HAP-1 (cell line): ENCODE measurements at regions of chr12 and their contacts with region 1.

Region 1: DNA sequence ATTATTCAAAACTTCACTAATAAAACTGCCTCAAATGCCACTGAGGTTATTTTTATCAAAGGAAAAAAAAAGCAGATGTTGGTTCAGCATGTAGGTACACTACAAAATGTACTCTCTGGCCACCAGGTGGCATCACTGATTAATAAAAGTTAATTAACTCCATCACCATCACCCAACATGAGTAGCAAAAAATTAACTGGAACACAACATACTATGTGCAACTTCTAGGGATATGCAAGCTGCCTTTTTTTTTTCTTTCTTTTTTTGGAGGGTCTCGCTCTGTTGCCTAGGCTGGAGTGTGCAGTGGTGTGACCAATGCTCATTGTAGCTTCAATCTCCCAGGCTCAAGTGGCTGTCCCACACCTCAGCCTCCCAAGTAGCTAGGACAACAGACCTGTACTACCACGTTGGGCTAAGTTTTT is 43.8 kb upstream of the NR2C1 start:
- DNase-seq: peak; percentile 75 to 82
- H3K4me3 ChIP-seq: no peak overlapping the region
- H3K4me1 ChIP-seq: peaks cover 2% of the 10 kb centered on the region; the same call in 1 of the 2 replicates
- H3K27me3 ChIP-seq: no peaks in the 10 kb centered on the region

Region 2: GRCh38 chr12:94980577-94980976 is 136.6 kb before region 1 on chr12:
- in situ Hi-C with region 1: no loop called
- DNase-seq: peak in 1 of 2 experiments; percentile 63
- H3K4me3 ChIP-seq: no peak overlapping the region
- H3K4me1 ChIP-seq: peaks cover 5% of the 10 kb centered on the region; the same call in 1 of the 2 replicates
- H3K27me3 ChIP-seq: no peaks in the 10 kb centered on the region

Region 3: DNA sequence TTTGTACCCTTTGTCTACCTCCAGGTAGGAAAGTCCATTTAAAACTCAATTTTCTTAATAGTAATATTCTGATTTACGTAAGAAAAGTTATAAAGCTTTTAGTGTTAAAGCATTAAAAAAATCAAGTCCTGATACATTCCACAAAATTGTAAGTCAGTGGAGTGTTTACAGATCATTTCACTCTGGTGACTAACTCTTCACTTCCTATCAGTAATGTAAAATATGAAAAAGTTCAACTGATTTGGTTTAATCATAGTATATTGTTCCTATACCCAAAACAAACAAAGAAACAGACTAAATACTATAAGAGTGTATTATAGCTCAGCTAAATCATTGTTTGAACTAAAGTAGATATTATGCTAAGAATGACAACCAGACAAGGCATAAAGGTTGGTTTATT is 186.3 kb after region 1 on chr12:
- in situ Hi-C with region 1: no loop called
- DNase-seq: no peak
- H3K4me3 ChIP-seq: no peak overlapping the region
- H3K4me1 ChIP-seq: no peaks in the 10 kb centered on the region
- H3K27me3 ChIP-seq: no peaks in the 10 kb centered on the region

Region 4: GRCh38 chr12:95532851-95533250 is 415.7 kb after region 1 on chr12:
- in situ Hi-C with region 1: loop called (anchors 5 kb)
- DNase-seq: no peak
- H3K4me3 ChIP-seq: no peak overlapping the region
- H3K4me1 ChIP-seq: peaks cover under 1% of the 10 kb centered on the region; the same call in 1 of the 2 replicates
- H3K27me3 ChIP-seq: peaks cover 16% of the 10 kb centered on the region